PC-3 (cell line): ENCODE measurements at regions of chr19 and their contacts with region 1.

Region 1: DNA sequence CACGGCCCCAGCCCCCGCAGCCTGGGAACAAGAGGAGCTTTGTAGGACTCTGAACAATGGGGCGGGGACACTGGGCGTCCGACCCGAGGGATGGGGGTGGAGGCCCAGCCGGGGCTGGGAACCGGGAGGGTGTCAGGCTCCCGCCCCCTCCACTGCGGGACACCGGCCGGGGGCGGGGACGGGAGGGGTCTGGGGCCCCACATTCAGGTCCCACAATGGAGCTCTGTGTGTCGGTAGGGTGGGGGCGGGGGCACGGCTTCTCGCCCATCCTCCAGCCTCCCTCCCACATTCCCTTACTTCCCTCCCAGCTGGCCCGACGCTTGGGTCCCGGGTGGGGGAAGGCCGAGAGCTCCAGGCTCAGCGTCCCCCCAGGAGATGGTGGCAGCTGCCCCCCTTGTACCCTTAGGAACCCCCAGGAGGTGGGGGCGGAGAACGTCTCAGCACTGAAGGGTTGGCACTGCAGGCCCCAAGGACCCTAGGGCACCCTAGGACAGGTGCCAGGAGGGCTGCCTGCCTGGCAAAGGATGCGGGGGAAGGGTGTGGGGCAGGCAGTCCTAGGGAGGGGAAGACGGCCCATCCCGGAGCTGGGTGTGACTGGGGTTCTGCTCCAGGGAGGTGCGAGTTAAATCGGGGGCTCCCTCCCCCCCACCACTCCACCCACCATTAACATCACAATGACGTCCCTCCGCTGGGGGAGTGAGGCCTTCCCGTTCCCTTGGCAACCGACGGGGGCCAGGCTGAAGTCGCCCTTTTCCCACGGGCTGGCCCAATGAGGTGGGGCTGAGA is 5.3 kb downstream of the TTYH1 start:
- DNase-seq: no peak
- ATAC-seq: no peak
- H3K4me3 ChIP-seq: no peak overlapping the region
- H3K27ac ChIP-seq: no peak overlapping the region
- H3K4me1 ChIP-seq: no peaks in the 10 kb centered on the region
- H3K27me3 ChIP-seq: peaks cover 6% of the 10 kb centered on the region; the same call in 1 of the 2 replicates
- CTCF ChIP-seq: no peak

Region 2: GRCh38 chr19:54373781-54374631 is 46.6 kb before region 1 on chr19:
- CTCF ChIA-PET with region 1: no interaction called
- POLR2A ChIA-PET with region 1: interaction called, 13 read pairs
- intact Hi-C with region 1: no loop called
- DNase-seq: no peak
- ATAC-seq: no peak
- H3K4me3 ChIP-seq: no peak overlapping the region
- H3K27ac ChIP-seq: no peak overlapping the region
- H3K4me1 ChIP-seq: no peaks in the 10 kb centered on the region
- H3K27me3 ChIP-seq: peaks cover 60% of the 10 kb centered on the region
- CTCF ChIP-seq: no peak

Region 3: GRCh38 chr19:54622431-54622830 is 201.9 kb after region 1 on chr19:
- CTCF ChIA-PET with region 1: no interaction called
- POLR2A ChIA-PET with region 1: no interaction called
- intact Hi-C with region 1: no loop called
- DNase-seq: no peak
- ATAC-seq: no peak
- H3K4me3 ChIP-seq: no peak overlapping the region
- H3K27ac ChIP-seq: no peak overlapping the region
- H3K4me1 ChIP-seq: no peaks in the 10 kb centered on the region
- H3K27me3 ChIP-seq: peaks cover 51% of the 10 kb centered on the region
- CTCF ChIP-seq: no peak